GM10248 (cell line): ENCODE measurements at regions of chr4 and their contacts with region 1.

Region 1: GRCh38 chr4:87498446-87498900 is 30.7 kb downstream of the SPARCL1 start:
- DNase-seq: no peak
- CTCF ChIP-seq: no peak

Region 2: DNA sequence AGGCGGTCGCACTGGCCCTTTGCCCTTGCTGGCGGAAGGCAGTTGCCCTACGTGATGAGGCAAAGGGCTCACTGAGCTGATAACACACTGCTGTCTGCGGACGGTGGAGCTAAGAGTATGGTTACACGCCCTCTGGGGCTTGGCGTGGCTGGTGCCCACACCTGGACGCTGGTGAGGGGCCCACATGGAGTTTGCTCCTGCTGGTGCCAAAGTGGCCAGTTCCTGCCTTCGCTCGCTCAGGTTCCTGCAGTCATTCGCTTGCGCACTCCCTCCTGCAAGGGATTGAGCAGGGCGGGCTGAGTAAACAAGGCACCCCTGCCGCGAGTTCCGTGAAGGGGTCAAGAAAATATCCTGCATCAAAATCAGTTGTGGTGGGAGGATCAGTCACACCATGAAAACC is 12.3 kb after region 1 on chr4:
- CTCF ChIA-PET with region 1: interaction called, 10 read pairs
- POLR2A ChIA-PET with region 1: no interaction called
- DNase-seq: no peak
- CTCF ChIP-seq: no peak

Region 3: GRCh38 chr4:88779431-88779830 is 1281.0 kb after region 1 on chr4:
- CTCF ChIA-PET with region 1: no interaction called
- POLR2A ChIA-PET with region 1: no interaction called
- DNase-seq: no peak
- CTCF ChIP-seq: no peak